ENCODE measurements at regions of chr7 and their contacts with region 1.

Region 1: DNA sequence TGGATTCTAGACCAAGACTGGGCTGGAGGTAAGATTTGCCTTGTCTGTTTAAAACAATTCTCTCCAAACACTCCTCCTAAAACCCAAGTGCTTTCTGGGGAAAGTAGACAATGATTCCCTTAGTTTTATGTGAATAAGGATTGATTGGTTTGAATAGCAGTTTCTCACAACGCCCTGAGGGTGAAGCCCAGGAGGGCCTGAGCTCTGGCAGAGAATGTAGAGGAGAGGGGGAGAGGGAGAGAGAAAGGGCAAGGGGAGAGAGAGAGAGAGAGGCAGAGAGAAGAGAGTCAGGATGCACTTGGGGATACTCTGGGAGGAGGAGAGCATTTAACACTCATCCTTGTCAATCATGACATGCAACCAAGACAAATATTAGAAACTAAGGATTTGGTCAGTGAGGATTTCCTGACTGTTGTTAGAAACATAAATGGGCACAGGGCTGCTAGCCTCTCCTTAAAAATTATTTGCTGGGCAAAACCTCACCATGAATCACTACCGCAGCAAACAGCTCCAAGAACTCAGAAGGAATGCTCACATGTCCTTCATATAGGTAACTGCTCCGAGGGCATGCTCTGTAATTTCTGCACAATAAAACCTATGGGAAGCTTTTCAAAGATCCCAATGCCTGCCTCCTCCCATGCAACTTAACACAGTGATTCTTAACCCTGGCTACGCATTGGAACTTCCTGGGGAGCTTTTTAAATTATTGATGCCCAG is 55.2 kb upstream of the RAPGEF5 start:
- DNase-seq: no peak
- ATAC-seq: no peak
- H3K4me3 ChIP-seq: no peak overlapping the region
- H3K27ac ChIP-seq: no peak overlapping the region
- H3K4me1 ChIP-seq: no peaks in the 10 kb centered on the region
- H3K27me3 ChIP-seq: no peaks in the 10 kb centered on the region
- CTCF ChIP-seq: no peak

Region 2: GRCh38 chr7:22361795-22362194 is 50.3 kb before region 1 on chr7:
- intact Hi-C with region 1: no loop called
- DNase-seq: no peak
- ATAC-seq: no peak
- H3K4me3 ChIP-seq: no peak overlapping the region
- H3K27ac ChIP-seq: no peak overlapping the region
- H3K4me1 ChIP-seq: peaks cover 0 to 7% (median 4%) of the 10 kb centered on the region in 9 donors
- H3K27me3 ChIP-seq: peaks cover 0 to 12% (median 0%) of the 10 kb centered on the region in 7 donors
- CTCF ChIP-seq: no peak

Region 3: DNA sequence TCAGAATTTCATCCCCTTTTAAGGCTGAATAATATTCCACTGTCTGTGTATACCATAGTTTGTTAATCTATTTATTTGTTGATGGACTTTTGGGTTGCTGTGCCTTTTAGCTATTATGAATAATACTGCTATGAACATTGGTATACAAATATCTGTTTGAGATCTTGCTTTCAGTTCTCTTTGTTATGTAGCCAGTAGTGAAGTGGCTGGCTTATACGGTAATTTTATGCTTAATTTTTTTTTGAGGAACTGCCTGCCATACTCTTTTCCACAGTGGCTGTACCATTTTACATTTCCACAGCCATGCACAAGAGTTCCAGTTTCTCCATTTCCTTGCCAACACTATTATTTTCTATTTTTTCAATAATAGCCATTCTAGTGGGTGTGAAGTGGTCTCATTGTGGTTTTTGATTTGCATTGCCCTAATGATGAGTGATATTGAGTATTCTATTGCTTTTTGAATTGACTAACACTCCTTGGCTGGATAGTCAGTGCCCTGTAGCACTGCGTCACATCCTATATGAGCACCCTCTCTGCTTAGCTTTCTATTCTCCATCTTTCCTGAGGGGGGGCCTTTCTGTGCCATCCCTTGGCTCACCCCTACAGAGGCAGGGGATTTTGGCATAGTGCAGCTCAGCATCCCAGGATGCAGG is 25.8 kb before region 1 on chr7:
- intact Hi-C with region 1: loop called in 1 of 10 experiments (anchors 1 kb)
- DNase-seq: no peak
- ATAC-seq: no peak
- H3K4me3 ChIP-seq: no peak overlapping the region
- H3K27ac ChIP-seq: no peak overlapping the region
- H3K4me1 ChIP-seq: peaks cover 0 to 5% (median 0%) of the 10 kb centered on the region in 9 donors
- H3K27me3 ChIP-seq: no peaks in the 10 kb centered on the region
- CTCF ChIP-seq: no peak